Uterus (tissue), 4 donors: ENCODE measurements at regions of chr5 and their contacts with region 1.

Region 1: GRCh38 chr5:81851481-81852178 is 100.7 kb upstream of the SSBP2 start:
- DNase-seq: peak; percentile 97 to 99
- H3K4me3 ChIP-seq: peak overlapping the region; percentile 39 to 51
- H3K27ac ChIP-seq: peak overlapping the region; percentile 86 to 95
- H3K4me1 ChIP-seq: peaks cover 3 to 6% of the 10 kb centered on the region in 2 donors
- H3K27me3 ChIP-seq: no peaks in the 10 kb centered on the region
- CTCF ChIP-seq: peak in 1 of 4 experiments; percentile 29
- POLR2A ChIP-seq: peak in 1 of 2 donors; percentile 62

Region 2: DNA sequence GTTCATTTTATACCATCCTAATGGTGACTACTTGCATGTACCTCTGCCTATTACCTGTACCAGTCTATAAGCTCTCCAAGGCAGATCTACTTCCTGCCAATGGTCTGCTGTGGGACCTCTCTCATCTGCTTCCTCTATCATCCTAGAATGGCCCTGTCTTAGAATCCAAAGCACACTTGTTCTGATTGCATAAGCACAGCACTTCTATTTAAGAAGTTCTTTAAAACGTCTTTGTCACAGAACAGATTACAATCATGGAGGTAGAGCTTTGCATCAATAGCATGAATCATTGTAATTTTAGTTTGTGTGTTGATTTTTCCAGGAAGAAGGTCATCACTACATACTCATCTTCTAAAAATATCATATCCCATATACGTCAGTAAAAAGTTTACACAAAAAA is 325.9 kb before region 1 on chr5:
- intact Hi-C with region 1: no loop called
- DNase-seq: no peak
- H3K4me3 ChIP-seq: no peak overlapping the region
- H3K27ac ChIP-seq: no peak overlapping the region
- H3K4me1 ChIP-seq: no peaks in the 10 kb centered on the region
- H3K27me3 ChIP-seq: no peaks in the 10 kb centered on the region
- CTCF ChIP-seq: no peak
- POLR2A ChIP-seq: no peak

Region 3: DNA sequence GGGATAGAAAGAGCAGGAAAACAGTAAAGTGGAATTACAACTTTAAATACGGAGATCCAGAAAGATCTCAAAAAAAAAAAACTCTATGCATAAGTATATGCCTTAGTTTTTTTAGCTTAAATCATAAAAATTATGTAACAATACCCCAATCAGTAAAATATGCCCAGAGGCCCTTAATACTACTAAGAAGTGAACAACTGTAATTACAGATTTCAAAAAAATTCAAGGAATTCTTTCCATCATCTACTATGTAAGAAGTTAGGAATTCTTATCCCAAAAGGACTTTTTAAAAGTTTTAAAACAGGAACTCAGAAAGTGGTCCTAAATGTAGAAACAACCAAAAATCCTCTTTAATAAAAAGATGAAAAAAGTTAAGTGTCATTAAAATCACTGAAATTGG is 212.1 kb before region 1 on chr5:
- intact Hi-C with region 1: no loop called
- DNase-seq: no peak
- H3K4me3 ChIP-seq: no peak overlapping the region
- H3K27ac ChIP-seq: no peak overlapping the region
- H3K4me1 ChIP-seq: peaks cover 4 to 8% of the 10 kb centered on the region in 2 donors
- H3K27me3 ChIP-seq: no peaks in the 10 kb centered on the region
- CTCF ChIP-seq: no peak
- POLR2A ChIP-seq: no peak

Region 4: DNA sequence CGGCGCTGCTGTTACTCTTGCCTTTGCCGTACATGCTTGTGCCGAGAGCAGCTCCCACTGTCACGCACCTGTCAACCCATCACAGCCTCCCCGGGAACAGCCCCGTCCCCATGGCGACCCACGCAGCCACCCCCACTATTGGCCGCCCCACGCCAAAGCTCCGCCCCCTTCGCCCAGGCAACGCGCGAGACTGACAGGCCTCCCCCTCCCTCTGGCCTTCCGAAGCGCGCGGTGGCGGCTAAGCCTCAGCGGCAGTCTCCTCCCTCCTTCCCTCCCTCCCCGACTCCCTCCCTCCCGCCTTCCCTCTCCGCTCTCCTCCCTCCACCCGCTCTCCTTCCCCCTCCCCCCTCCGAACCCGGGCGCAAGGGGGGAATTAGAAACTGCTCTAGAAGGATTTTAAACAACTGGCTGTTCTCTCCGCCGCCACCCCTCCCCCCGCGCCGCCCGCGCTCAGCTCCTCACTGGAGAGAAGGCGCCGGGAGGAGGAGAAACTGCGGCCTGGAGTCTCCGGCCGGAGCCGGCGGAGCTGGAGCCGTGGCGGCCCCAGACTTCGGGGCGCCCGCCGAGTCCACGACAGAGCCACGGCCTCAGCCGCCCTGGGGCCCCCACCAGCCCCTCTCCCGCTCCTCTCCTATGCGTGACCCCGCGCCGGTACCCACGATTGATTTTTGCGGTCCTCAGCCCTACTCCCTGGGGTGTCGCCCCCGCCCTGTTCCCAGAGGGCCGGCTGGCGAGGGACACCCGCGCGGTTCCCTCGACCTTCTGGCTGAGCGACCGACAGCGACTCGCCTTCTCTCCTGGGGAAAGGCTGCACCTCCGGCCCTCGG is 100.4 kb before region 1 on chr5 and contains the start of gene SSBP2:
- intact Hi-C with region 1: loop called (anchors 1 kb)
- DNase-seq: peak; percentile 100
- H3K4me3 ChIP-seq: peak within 1 kb of the TSS; percentile 68 to 87
- H3K27ac ChIP-seq: peak within 1 kb of the TSS; percentile 97 to 99
- H3K4me1 ChIP-seq: peaks cover 0 to 23% of the 10 kb centered on the region in 2 donors
- H3K27me3 ChIP-seq: no peaks in the 10 kb centered on the region
- CTCF ChIP-seq: peak in 1 of 4 experiments; percentile 49
- POLR2A ChIP-seq: peak; percentile 75 to 89
- total RNA-seq, gene SSBP2: 22.0 to 204 (median 90.9) TPM

Region 5: GRCh38 chr5:81787474-81788242 is 64.0 kb before region 1 on chr5:
- intact Hi-C with region 1: loop called (anchors 5 kb)
- DNase-seq: peak; percentile 53 to 91
- H3K4me3 ChIP-seq: no peak overlapping the region
- H3K27ac ChIP-seq: peak overlapping the region; percentile 66 to 69
- H3K4me1 ChIP-seq: peaks cover 0 to 10% of the 10 kb centered on the region in 2 donors
- H3K27me3 ChIP-seq: no peaks in the 10 kb centered on the region
- CTCF ChIP-seq: peak in 2 of 4 experiments; percentile 3 to 4
- POLR2A ChIP-seq: no peak

Region 6: GRCh38 chr5:81965524-81965923 is 113.9 kb after region 1 on chr5:
- intact Hi-C with region 1: loop called (anchors 10 kb)
- DNase-seq: no peak
- H3K4me3 ChIP-seq: no peak overlapping the region
- H3K27ac ChIP-seq: no peak overlapping the region
- H3K4me1 ChIP-seq: no peaks in the 10 kb centered on the region
- H3K27me3 ChIP-seq: no peaks in the 10 kb centered on the region
- CTCF ChIP-seq: no peak
- POLR2A ChIP-seq: no peak